CD4-positive, alpha-beta T cell (primary cell): ENCODE measurements at regions of chr16 and their contacts with region 1.

Region 1: DNA sequence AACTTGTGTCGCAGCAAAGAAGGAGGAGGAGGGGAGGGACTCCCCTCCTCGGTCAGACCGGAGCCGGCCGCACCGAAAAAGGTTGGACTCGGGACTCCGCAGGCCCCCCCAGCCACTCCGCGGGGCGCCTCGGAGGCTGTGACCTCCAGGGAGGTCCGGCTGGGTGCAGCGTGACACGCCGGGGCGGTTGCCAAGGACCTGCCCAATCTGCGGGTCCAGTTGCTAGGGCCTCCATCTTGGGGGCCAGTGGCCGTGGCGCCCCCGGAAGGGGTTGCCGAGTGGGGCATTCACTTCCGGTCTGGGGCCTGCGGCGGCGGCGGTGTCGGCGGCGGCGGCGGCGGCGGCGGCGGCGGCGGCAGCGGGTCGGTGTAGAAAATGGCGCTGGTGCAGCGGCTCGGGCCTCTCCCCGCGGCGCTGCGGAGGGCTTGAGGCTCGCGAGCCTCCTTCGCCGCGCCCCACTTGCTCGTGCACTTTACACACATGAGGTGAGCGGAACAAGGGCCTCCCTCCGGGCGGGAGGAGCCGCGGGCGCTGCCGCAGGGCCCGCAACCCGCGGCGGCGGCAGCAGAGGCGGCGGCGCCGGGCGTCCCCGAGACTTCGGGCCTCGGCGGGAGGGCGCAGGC is at the start of gene TNRC6A:
- DNase-seq: peak; percentile 59 to 90 (median 70)
- ATAC-seq: peak; percentile 81
- H3K4me3 ChIP-seq: peak within 1 kb of the TSS; percentile 82
- H3K4me3 Mint-ChIP-seq: peak within 1 kb of the TSS; percentile 100
- H3K27ac ChIP-seq: peak within 1 kb of the TSS; percentile 91 to 96
- H3K27ac Mint-ChIP-seq: peak within 1 kb of the TSS; percentile 99
- H3K4me1 ChIP-seq: peaks cover 15% of the 10 kb centered on the region
- H3K4me1 Mint-ChIP-seq: peaks cover 51% of the 10 kb centered on the region
- H3K27me3 ChIP-seq: no peaks in the 10 kb centered on the region
- H3K27me3 Mint-ChIP-seq: peaks cover 4% of the 10 kb centered on the region
- CTCF ChIP-seq: no peak
- total RNA-seq, gene TNRC6A: 70.4 to 74.6 TPM

Region 2: DNA sequence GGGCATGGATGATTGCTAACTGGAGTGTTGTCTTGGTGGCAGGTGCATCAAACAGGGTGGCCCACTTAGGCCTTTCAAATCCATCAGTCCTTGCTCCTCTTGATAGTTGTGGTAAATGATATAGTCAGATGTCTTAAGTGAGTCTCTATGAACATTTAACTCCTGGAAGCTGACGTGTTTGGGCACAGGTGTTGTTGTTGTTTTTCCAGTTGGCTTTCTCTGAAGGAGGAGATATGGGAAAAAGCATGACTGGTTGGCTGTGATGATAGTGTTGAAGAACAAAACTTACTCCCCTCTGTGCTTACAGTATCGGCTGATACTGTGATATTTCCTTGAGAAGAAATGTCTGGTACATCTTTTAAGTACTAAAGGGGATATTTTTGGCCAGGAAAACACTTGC is 18.0 kb after region 1 on chr16:
- CTCF ChIA-PET with region 1: interaction called, 5 read pairs
- POLR2A ChIA-PET with region 1: interaction called, 6 read pairs
- intact Hi-C with region 1: loop called in 1 of 2 experiments (anchors 2 kb)
- DNase-seq: no peak
- ATAC-seq: no peak
- H3K4me3 ChIP-seq: no peak overlapping the region
- H3K4me3 Mint-ChIP-seq: peak overlapping the region; percentile 28
- H3K27ac ChIP-seq: no peak overlapping the region
- H3K27ac Mint-ChIP-seq: peak overlapping the region; percentile 15
- H3K4me1 ChIP-seq: peaks cover 34% of the 10 kb centered on the region
- H3K4me1 Mint-ChIP-seq: peaks cover 89% of the 10 kb centered on the region
- H3K27me3 ChIP-seq: no peaks in the 10 kb centered on the region
- H3K27me3 Mint-ChIP-seq: no peaks in the 10 kb centered on the region
- CTCF ChIP-seq: no peak

Region 3: DNA sequence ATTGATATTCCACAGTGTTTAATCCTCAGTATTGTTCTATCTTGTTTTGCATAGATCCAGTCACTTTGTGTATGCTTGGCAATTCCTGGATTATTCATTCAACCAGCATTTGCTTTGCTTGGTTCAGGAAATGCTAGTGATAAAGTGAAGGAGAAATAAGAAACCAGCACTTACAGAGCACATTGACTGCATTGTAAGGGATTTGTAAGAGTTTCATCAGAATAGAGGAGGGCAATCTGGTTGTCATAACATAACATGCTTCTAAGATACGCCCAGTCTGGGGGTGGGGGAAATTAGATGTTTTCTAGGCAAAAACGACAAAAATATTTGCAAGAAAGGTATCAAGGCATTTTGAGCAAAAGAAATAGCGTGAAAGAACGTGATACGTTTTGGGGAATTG is 40.3 kb after region 1 on chr16:
- CTCF ChIA-PET with region 1: no interaction called
- POLR2A ChIA-PET with region 1: no interaction called
- intact Hi-C with region 1: loop called in 1 of 2 experiments (anchors 5 kb)
- DNase-seq: no peak
- ATAC-seq: no peak
- H3K4me3 ChIP-seq: no peak overlapping the region
- H3K4me3 Mint-ChIP-seq: no peak overlapping the region
- H3K27ac ChIP-seq: no peak overlapping the region
- H3K27ac Mint-ChIP-seq: peak overlapping the region; percentile 65
- H3K4me1 ChIP-seq: peaks cover 4% of the 10 kb centered on the region
- H3K4me1 Mint-ChIP-seq: peaks cover 75% of the 10 kb centered on the region
- H3K27me3 ChIP-seq: no peaks in the 10 kb centered on the region
- H3K27me3 Mint-ChIP-seq: no peaks in the 10 kb centered on the region
- CTCF ChIP-seq: no peak

Region 4: GRCh38 chr16:24921229-24921628 is 191.8 kb after region 1 on chr16:
- CTCF ChIA-PET with region 1: no interaction called
- POLR2A ChIA-PET with region 1: no interaction called
- intact Hi-C with region 1: no loop called
- DNase-seq: peak in 1 of 14 experiments; percentile 37
- ATAC-seq: no peak
- H3K4me3 ChIP-seq: no peak overlapping the region
- H3K4me3 Mint-ChIP-seq: no peak overlapping the region
- H3K27ac ChIP-seq: no peak overlapping the region
- H3K27ac Mint-ChIP-seq: peak overlapping the region; percentile 13
- H3K4me1 ChIP-seq: no peaks in the 10 kb centered on the region
- H3K4me1 Mint-ChIP-seq: peaks cover 7% of the 10 kb centered on the region
- H3K27me3 ChIP-seq: no peaks in the 10 kb centered on the region
- H3K27me3 Mint-ChIP-seq: no peaks in the 10 kb centered on the region
- CTCF ChIP-seq: no peak

Region 5: DNA sequence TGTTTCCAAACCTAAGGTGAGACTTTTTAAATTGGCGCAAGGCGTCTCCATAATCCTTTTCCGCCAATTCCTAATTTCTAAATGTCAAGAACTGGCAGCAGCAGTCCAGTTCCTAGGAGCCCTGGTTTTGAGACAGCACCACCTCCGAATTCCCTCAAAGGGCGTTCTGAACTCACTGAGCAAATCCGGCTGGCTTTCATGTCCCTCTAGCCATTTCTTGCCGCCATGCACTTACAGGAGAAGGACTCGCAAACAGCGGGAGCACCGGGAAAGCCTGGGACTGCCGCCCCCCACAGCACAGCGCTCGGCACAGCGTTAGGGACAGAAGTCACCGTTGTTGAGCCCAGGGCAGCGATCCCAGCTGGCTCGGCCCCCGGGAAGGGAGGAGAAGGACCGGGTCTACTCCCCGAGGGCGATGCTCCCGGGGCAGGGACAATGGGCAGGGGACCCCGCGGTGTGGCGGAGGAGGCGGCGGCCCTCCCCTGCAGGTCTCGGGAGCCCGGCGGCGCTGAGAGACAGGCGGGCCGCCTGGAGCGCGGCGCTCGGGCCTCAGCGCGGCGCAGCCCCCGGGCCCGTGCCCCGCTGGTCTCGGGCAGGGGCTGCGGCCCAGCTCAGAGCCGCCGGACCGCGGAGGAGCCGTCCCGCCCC is 285.2 kb after region 1 on chr16:
- CTCF ChIA-PET with region 1: no interaction called
- POLR2A ChIA-PET with region 1: interaction called, 4 read pairs
- intact Hi-C with region 1: loop called in 1 of 2 experiments (anchors 10 kb)
- DNase-seq: peak in 10 of 14 experiments; percentile 1 to 49 (median 13)
- ATAC-seq: peak; percentile 34
- H3K4me3 ChIP-seq: peak overlapping the region; percentile 89
- H3K4me3 Mint-ChIP-seq: peak overlapping the region; percentile 96
- H3K27ac ChIP-seq: peak overlapping the region; percentile 76 to 78
- H3K27ac Mint-ChIP-seq: peak overlapping the region; percentile 91
- H3K4me1 ChIP-seq: peaks cover 58% of the 10 kb centered on the region
- H3K4me1 Mint-ChIP-seq: peaks cover 79% of the 10 kb centered on the region
- H3K27me3 ChIP-seq: no peaks in the 10 kb centered on the region
- H3K27me3 Mint-ChIP-seq: no peaks in the 10 kb centered on the region
- CTCF ChIP-seq: no peak

Region 6: GRCh38 chr16:25257504-25257955 is 528.1 kb after region 1 on chr16 and contains the start of gene ZKSCAN2:
- CTCF ChIA-PET with region 1: no interaction called
- POLR2A ChIA-PET with region 1: no interaction called
- intact Hi-C with region 1: loop called in 1 of 2 experiments (anchors 5 kb)
- DNase-seq: peak; percentile 56 to 91 (median 78)
- ATAC-seq: peak; percentile 68
- H3K4me3 ChIP-seq: peak within 1 kb of the TSS; percentile 87
- H3K4me3 Mint-ChIP-seq: peak within 1 kb of the TSS; percentile 96
- H3K27ac ChIP-seq: peak within 1 kb of the TSS; percentile 80 to 92
- H3K27ac Mint-ChIP-seq: peak within 1 kb of the TSS; percentile 94
- H3K4me1 ChIP-seq: peaks cover 39% of the 10 kb centered on the region
- H3K4me1 Mint-ChIP-seq: peaks cover 68% of the 10 kb centered on the region
- H3K27me3 ChIP-seq: no peaks in the 10 kb centered on the region
- H3K27me3 Mint-ChIP-seq: no peaks in the 10 kb centered on the region
- CTCF ChIP-seq: no peak
- total RNA-seq, gene ZKSCAN2: 9.5 to 10.2 TPM

Region 7: DNA sequence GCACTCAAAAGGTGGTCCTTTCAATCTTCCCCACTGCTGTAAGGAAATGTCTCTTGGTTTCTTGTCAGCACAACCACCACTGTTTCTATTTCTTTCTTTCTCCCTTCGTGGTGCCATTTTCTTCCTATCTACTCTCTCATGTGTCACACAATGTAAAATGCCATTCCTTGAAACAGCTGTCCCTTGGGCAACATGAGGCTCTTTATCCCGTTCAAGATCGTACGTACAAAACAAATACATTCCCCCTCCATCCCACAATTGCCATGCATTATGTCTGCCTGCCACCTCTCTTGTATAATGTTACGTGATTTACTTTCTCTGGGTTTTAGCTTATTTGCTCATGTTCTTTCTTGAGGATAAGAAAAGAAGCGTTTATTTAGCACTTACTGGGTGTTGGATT is 1372.9 kb after region 1 on chr16:
- CTCF ChIA-PET with region 1: no interaction called
- POLR2A ChIA-PET with region 1: no interaction called
- intact Hi-C with region 1: no loop called
- DNase-seq: no peak
- ATAC-seq: no peak
- H3K4me3 ChIP-seq: no peak overlapping the region
- H3K4me3 Mint-ChIP-seq: no peak overlapping the region
- H3K27ac ChIP-seq: no peak overlapping the region
- H3K27ac Mint-ChIP-seq: no peak overlapping the region
- H3K4me1 ChIP-seq: no peaks in the 10 kb centered on the region
- H3K4me1 Mint-ChIP-seq: no peaks in the 10 kb centered on the region
- H3K27me3 ChIP-seq: no peaks in the 10 kb centered on the region
- H3K27me3 Mint-ChIP-seq: peaks cover 6% of the 10 kb centered on the region
- CTCF ChIP-seq: no peak